ENCODE measurements at regions of chr3 and their contacts with region 1.

Region 1: GRCh38 chr3:69791919-69792399 is 52.7 kb downstream of the MITF start:
- DNase-seq: peak; percentile 40 to 81 (median 52)
- ATAC-seq: peak; percentile 90
- H3K4me3 ChIP-seq: no peak overlapping the region; the same call in 1 of the 2 replicates
- H3K27ac ChIP-seq: peak overlapping the region; percentile 78; the same call in 2 of the 3 replicates
- H3K4me1 ChIP-seq: peaks cover 0 to 36% of the 10 kb centered on the region in 2 experiments; a peak in 3 of 5 replicates
- H3K27me3 ChIP-seq: no peaks in the 10 kb centered on the region
- CTCF ChIP-seq: peak; percentile 38 to 74 (median 63); a peak in 5 of 6 replicates
- EP300 ChIP-seq: peak; percentile 99
- POLR2A ChIP-seq: no peak
- RAD21 ChIP-seq: peak; percentile 90 to 92

Region 2: GRCh38 chr3:69739204-69740102 is 52.5 kb before region 1 on chr3 and contains the start of gene MITF:
- CTCF ChIA-PET with region 1: no interaction called
- POLR2A ChIA-PET with region 1: interaction called, 4 read pairs
- in situ Hi-C with region 1: no loop called
- intact Hi-C with region 1: loop called (anchors 5 kb)
- DNase-seq: peak; percentile 86 to 93 (median 88)
- ATAC-seq: peak; percentile 90
- H3K4me3 ChIP-seq: peak within 1 kb of the TSS; percentile 58
- H3K27ac ChIP-seq: peak within 1 kb of the TSS; percentile 72
- H3K4me1 ChIP-seq: peaks cover 5 to 34% of the 10 kb centered on the region in 2 experiments; a peak in 3 of 5 replicates
- H3K27me3 ChIP-seq: no peaks in the 10 kb centered on the region
- CTCF ChIP-seq: no peak
- EP300 ChIP-seq: no peak
- POLR2A ChIP-seq: no peak; the same call in 1 of the 2 replicates
- RAD21 ChIP-seq: no peak
- polyA plus RNA-seq, gene MITF: 5.6 to 9.0 TPM

Region 3: DNA sequence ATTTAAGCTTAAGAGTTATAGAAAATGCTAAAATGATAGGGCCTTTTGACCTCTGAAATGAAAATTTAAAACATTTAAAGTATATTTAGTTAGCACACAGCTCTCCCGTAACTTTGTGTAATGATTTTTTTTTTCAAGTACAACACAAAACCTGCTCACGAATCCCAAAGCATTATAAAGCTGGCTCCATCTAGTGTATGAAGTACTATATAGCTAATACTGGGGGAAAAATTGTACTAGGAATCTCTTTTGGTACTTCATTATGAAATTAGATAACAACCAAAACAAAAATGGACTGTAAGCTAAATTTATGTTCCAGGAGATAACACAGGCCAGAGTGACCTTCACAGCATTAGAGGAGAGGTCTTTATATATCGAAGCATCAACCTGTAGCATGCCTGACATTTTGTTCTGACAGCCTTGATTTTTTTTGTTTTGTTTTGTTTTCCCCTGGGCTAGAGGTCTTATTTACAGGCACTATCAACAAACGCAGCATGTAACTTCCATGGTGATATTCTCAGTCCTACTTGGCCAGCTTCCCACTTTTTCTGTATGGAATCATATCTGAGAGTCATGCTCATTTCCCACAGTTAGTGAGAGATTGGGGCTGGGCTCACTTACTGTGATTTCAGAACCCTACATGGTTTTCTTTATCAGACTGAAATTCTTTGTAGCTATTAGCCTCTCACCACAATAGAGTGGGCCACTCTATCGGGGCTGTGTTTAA is 63.6 kb after region 1 on chr3:
- CTCF ChIA-PET with region 1: no interaction called
- POLR2A ChIA-PET with region 1: no interaction called
- in situ Hi-C with region 1: no loop called
- intact Hi-C with region 1: loop called (anchors 5 kb)
- DNase-seq: peak in 1 of 4 experiments; percentile 20
- ATAC-seq: peak; percentile 75
- H3K4me3 ChIP-seq: no peak overlapping the region
- H3K27ac ChIP-seq: no peak overlapping the region
- H3K4me1 ChIP-seq: peaks cover 0 to 3% of the 10 kb centered on the region in 2 experiments; a peak in 3 of 5 replicates
- H3K27me3 ChIP-seq: no peaks in the 10 kb centered on the region
- CTCF ChIP-seq: peak in 2 of 3 experiments; percentile 14 to 52; a peak in 2 of 6 replicates
- EP300 ChIP-seq: no peak
- POLR2A ChIP-seq: no peak
- RAD21 ChIP-seq: peak; percentile 50 to 64; a peak in 3 of 4 replicates